Right cardiac atrium (tissue), 5 donors: ENCODE measurements at regions of chr10 and their contacts with region 1.

Region 1: GRCh38 chr10:72834183-72834825 is 59.2 kb upstream of the OIT3 start:
- DNase-seq: no peak
- ATAC-seq: peak; percentile 59 to 76
- H3K4me3 ChIP-seq: no peak overlapping the region
- H3K27ac ChIP-seq: no peak overlapping the region
- H3K4me1 ChIP-seq: no peaks in the 10 kb centered on the region
- H3K27me3 ChIP-seq: no peaks in the 10 kb centered on the region

Region 2: GRCh38 chr10:72692057-72692910 is 142.0 kb before region 1 on chr10 and contains the start of gene MCU:
- intact Hi-C with region 1: loop called (anchors 2 to 10 kb)
- DNase-seq: peak; percentile 95 to 98 (median 97)
- ATAC-seq: peak; percentile 96 to 98
- H3K4me3 ChIP-seq: peak within 1 kb of the TSS; percentile 92
- H3K27ac ChIP-seq: peak within 1 kb of the TSS; percentile 97
- H3K4me1 ChIP-seq: no peaks in the 10 kb centered on the region
- H3K27me3 ChIP-seq: no peaks in the 10 kb centered on the region
- total RNA-seq, gene MCU: 17.7 to 22.1 (median 18.8) TPM

Region 3: DNA sequence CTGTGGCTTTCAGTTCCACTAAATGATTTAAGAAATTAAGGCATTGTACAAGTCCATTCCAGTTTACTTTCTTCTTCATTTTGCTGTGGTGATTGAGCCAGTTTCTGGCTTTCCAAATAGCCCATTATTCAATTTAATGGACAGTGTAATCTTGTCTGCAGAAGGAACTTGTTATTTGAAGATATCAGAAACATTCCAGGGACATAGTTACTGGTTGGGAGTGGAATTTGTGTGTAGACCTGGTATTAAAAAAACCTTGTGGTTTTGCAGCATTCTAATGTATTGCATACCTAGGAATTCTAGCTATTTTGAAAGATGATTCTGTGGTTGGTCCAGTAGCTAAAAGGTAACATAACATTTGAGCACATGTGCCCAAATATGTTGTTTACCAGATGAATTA is 70.2 kb before region 1 on chr10:
- intact Hi-C with region 1: no loop called
- DNase-seq: no peak
- ATAC-seq: no peak
- H3K4me3 ChIP-seq: no peak overlapping the region
- H3K27ac ChIP-seq: no peak overlapping the region
- H3K4me1 ChIP-seq: no peaks in the 10 kb centered on the region
- H3K27me3 ChIP-seq: no peaks in the 10 kb centered on the region

Region 4: GRCh38 chr10:72913287-72913686 is 79.0 kb after region 1 on chr10:
- intact Hi-C with region 1: no loop called
- DNase-seq: no peak
- ATAC-seq: no peak
- H3K4me3 ChIP-seq: no peak overlapping the region
- H3K27ac ChIP-seq: no peak overlapping the region
- H3K4me1 ChIP-seq: no peaks in the 10 kb centered on the region
- H3K27me3 ChIP-seq: no peaks in the 10 kb centered on the region